ENCODE measurements at regions of chr10 and their contacts with region 1.

Region 1: DNA sequence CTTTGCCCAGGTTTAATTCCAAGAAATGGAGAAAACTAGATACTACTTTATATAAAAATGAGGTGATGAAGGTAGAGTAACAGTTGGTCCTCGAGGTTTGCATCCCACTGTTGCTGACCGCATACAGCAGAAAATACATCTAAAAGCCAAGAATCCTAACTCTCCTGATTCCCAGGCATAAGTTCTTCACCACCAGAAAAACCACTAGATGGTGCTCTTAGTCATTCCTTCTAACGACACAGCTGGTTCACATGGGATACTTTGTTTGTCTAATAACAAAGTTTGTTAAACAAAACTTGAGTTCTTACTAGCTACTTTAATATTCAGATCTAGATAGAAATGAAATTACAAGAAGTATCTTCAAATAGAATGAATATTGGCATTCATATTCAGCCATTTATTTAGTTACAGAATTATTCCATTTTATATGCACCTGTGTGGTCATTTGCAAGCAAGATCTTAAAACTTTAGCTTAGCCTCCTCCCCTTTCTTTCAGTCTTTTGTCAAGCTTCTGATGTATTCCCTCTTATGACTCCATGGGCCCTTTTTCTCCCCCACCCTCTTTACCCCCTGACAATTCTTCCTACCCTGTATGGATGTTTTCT is 54.1 kb upstream of the CYP26C1 start:
- DNase-seq: peak; percentile 30
- H3K4me3 ChIP-seq: no peak overlapping the region
- H3K27ac ChIP-seq: no peak overlapping the region
- H3K4me1 ChIP-seq: no peaks in the 10 kb centered on the region
- H3K27me3 ChIP-seq: no peaks in the 10 kb centered on the region
- CTCF ChIP-seq: peak; percentile 80
- EP300 ChIP-seq: no peak
- RAD21 ChIP-seq: peak; percentile 75

Region 2: DNA sequence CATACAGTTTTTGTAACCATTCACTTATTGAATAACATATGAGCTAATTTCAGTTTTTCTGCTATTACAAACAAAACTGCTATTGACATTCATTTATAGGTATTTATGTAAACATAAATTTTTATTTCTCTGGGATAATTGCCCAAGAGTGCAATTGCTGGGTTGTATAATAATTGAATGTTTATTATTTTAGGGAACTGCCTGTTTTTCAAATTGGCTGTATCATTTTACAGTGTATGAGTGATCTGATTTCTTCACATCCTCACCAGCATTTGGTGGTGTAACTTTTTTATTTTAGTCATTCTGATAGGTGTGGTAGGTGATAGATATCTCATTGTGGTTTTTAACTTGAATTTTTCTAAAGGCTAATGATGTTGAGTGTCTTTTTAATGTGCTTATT is 387.2 kb before region 1 on chr10:
- CTCF ChIA-PET with region 1: no interaction called
- POLR2A ChIA-PET with region 1: no interaction called
- DNase-seq: no peak
- H3K4me3 ChIP-seq: no peak overlapping the region
- H3K27ac ChIP-seq: no peak overlapping the region
- H3K4me1 ChIP-seq: no peaks in the 10 kb centered on the region
- H3K27me3 ChIP-seq: no peaks in the 10 kb centered on the region
- CTCF ChIP-seq: no peak
- EP300 ChIP-seq: no peak
- RAD21 ChIP-seq: no peak

Region 3: GRCh38 chr10:92719991-92720830 is 286.3 kb before region 1 on chr10:
- CTCF ChIA-PET with region 1: no interaction called
- POLR2A ChIA-PET with region 1: no interaction called
- DNase-seq: no peak
- H3K4me3 ChIP-seq: no peak overlapping the region
- H3K27ac ChIP-seq: no peak overlapping the region
- H3K4me1 ChIP-seq: no peaks in the 10 kb centered on the region
- H3K27me3 ChIP-seq: no peaks in the 10 kb centered on the region
- CTCF ChIP-seq: no peak
- EP300 ChIP-seq: no peak
- RAD21 ChIP-seq: no peak

Region 4: DNA sequence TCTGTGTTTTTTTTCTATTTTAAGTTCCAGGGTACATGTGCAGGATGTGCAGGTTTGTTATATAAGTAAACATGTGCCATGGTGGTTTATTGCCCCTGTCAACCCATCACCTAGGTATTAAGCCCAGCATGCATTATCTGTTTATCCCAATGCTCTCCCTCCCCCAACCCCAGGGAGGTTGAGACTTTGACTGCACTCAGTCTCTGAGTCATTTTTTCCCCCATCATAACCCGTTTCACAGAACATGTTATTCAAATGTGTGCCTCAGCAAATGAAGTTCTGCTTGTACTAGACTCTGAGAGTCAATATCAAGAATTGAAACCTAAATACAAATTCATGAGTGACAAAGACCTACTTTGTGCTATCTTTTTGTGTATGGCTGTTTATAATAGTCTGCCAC is 15.9 kb before region 1 on chr10:
- CTCF ChIA-PET with region 1: interaction called, 11 read pairs
- POLR2A ChIA-PET with region 1: no interaction called
- DNase-seq: no peak
- H3K4me3 ChIP-seq: no peak overlapping the region
- H3K27ac ChIP-seq: no peak overlapping the region
- H3K4me1 ChIP-seq: peaks cover 0 to 6% of the 10 kb centered on the region in 2 experiments; a peak in 2 of 4 replicates
- H3K27me3 ChIP-seq: no peaks in the 10 kb centered on the region
- CTCF ChIP-seq: no peak
- EP300 ChIP-seq: no peak
- RAD21 ChIP-seq: no peak

Region 5: DNA sequence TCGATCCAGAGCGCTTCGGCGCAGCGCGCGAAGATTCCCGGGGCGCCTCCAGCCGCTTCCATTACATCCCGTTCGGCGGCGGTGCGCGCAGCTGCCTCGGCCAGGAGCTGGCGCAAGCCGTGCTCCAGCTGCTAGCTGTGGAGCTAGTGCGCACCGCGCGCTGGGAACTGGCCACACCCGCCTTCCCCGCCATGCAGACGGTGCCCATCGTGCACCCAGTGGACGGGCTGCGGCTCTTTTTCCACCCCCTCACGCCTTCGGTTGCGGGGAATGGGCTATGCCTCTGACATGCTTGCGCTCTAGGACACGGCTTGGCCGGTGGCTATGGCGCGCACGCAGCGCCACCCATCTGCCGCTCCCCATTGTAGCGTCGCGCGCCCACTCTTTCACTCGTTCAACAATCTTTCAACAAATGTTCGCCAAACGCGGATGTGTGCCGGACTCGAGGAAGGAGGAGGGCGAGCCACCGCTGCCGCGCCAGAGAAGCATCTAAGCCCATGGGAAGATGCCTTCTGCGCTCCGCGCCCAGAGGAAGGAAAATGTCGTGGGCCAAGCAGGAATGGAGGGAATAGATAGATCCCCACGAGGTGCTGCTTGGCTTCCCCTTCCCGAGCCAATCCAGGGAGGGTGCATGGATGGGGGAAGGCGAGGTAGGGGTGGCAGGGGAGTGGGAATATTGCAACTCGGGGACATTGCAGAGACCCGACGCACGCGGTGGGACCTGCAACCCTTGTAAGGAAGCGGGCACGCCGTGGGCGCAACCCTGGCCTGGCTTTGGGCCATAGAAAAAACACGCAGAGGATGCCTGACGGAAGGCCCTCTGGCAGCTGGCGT is 62.1 kb after region 1 on chr10:
- CTCF ChIA-PET with region 1: interaction called, 12 read pairs
- POLR2A ChIA-PET with region 1: no interaction called
- DNase-seq: peak; percentile 71
- H3K4me3 ChIP-seq: peak overlapping the region in 1 of 2 experiments; percentile 35
- H3K27ac ChIP-seq: no peak overlapping the region
- H3K4me1 ChIP-seq: peaks cover 0 to 32% of the 10 kb centered on the region in 2 experiments; a peak in 1 of 4 replicates
- H3K27me3 ChIP-seq: peaks cover 59% of the 10 kb centered on the region
- CTCF ChIP-seq: 0 out of 2 replicates have a peak, but pooled peaks have one; percentile 18
- EP300 ChIP-seq: no peak
- RAD21 ChIP-seq: no peak

Region 6: DNA sequence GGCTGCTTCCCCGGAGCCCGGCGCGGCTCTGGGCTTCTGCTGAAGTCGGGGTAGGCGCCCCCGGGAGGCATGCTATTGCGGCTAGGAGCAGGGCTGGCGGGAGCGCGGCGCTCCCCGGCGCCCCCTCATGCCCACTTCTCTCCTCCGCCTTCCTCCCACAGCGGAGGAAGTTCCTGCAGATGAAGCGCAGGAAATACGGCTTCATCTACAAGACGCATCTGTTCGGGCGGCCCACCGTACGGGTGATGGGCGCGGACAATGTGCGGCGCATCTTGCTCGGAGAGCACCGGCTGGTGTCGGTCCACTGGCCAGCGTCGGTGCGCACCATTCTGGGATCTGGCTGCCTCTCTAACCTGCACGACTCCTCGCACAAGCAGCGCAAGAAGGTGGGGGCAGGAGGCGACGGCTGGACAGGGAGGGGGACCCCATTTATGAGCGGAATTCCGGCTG is 67.6 kb after region 1 on chr10:
- CTCF ChIA-PET with region 1: interaction called, 12 read pairs
- POLR2A ChIA-PET with region 1: no interaction called
- DNase-seq: peak; percentile 71
- H3K4me3 ChIP-seq: peak overlapping the region; percentile 46 to 52
- H3K27ac ChIP-seq: no peak overlapping the region
- H3K4me1 ChIP-seq: peaks cover 0 to 37% of the 10 kb centered on the region in 2 experiments; a peak in 1 of 4 replicates
- H3K27me3 ChIP-seq: peaks cover 45% of the 10 kb centered on the region
- CTCF ChIP-seq: no peak; the same call in 1 of the 2 replicates
- EP300 ChIP-seq: no peak
- RAD21 ChIP-seq: no peak